SK-N-SH (cell line): ENCODE measurements at regions of chr4 and their contacts with region 1.

Region 1: GRCh38 chr4:37567841-37568240 is 118.3 kb downstream of the RELL1 start:
- DNase-seq: no peak
- H3K4me3 ChIP-seq: no peak overlapping the region
- H3K27ac ChIP-seq: no peak overlapping the region
- H3K4me1 ChIP-seq: no peaks in the 10 kb centered on the region
- H3K27me3 ChIP-seq: no peaks in the 10 kb centered on the region
- CTCF ChIP-seq: no peak
- EP300 ChIP-seq: no peak
- RAD21 ChIP-seq: no peak

Region 2: GRCh38 chr4:37452952-37453280 is 114.9 kb before region 1 on chr4:
- CTCF ChIA-PET with region 1: interaction called, 31 read pairs
- POLR2A ChIA-PET with region 1: no interaction called
- DNase-seq: peak; percentile 47
- H3K4me3 ChIP-seq: peak overlapping the region in 1 of 2 experiments; percentile 59; a peak in 1 of 4 replicates
- H3K27ac ChIP-seq: no peak overlapping the region
- H3K4me1 ChIP-seq: peaks cover 0 to 6% of the 10 kb centered on the region in 2 experiments; a peak in 1 of 4 replicates
- H3K27me3 ChIP-seq: peaks cover 31% of the 10 kb centered on the region; the same call in 1 of the 2 replicates
- CTCF ChIP-seq: peak; percentile 68
- EP300 ChIP-seq: no peak
- RAD21 ChIP-seq: peak; percentile 72

Region 3: GRCh38 chr4:37584071-37584470 is 16.2 kb after region 1 on chr4:
- CTCF ChIA-PET with region 1: interaction called, 17 read pairs
- POLR2A ChIA-PET with region 1: no interaction called
- DNase-seq: no peak
- H3K4me3 ChIP-seq: no peak overlapping the region
- H3K27ac ChIP-seq: no peak overlapping the region
- H3K4me1 ChIP-seq: no peaks in the 10 kb centered on the region
- H3K27me3 ChIP-seq: no peaks in the 10 kb centered on the region
- CTCF ChIP-seq: no peak
- EP300 ChIP-seq: no peak
- RAD21 ChIP-seq: no peak

Region 4: GRCh38 chr4:37742149-37742548 is 174.3 kb after region 1 on chr4:
- CTCF ChIA-PET with region 1: no interaction called
- POLR2A ChIA-PET with region 1: no interaction called
- DNase-seq: no peak
- H3K4me3 ChIP-seq: no peak overlapping the region
- H3K27ac ChIP-seq: no peak overlapping the region
- H3K4me1 ChIP-seq: no peaks in the 10 kb centered on the region
- H3K27me3 ChIP-seq: no peaks in the 10 kb centered on the region; the same call in 1 of the 2 replicates
- CTCF ChIP-seq: no peak
- EP300 ChIP-seq: no peak
- RAD21 ChIP-seq: no peak